A549 (cell line): ENCODE measurements at regions of chr12 and their contacts with region 1.

Region 1: GRCh38 chr12:113048716-113049127 is 7.8 kb upstream of the DTX1 start:
- DNase-seq: peak; percentile 73 to 89
- ATAC-seq: peak; percentile 70 to 90
- H3K4me3 ChIP-seq: no peak overlapping the region
- H3K27ac ChIP-seq: no peak overlapping the region
- H3K4me1 ChIP-seq: no peaks in the 10 kb centered on the region
- CTCF ChIP-seq: peak; percentile 90
- EP300 ChIP-seq: no peak
- POLR2A ChIP-seq: no peak
- RAD21 ChIP-seq: peak; percentile 87 to 96

Region 2: GRCh38 chr12:113030875-113031525 is 17.7 kb before region 1 on chr12:
- CTCF ChIA-PET with region 1: interaction called, 11 read pairs
- POLR2A ChIA-PET with region 1: no interaction called
- DNase-seq: peak; percentile 72 to 88
- ATAC-seq: peak; percentile 87 to 98
- H3K4me3 ChIP-seq: no peak overlapping the region
- H3K27ac ChIP-seq: no peak overlapping the region
- H3K4me1 ChIP-seq: no peaks in the 10 kb centered on the region
- CTCF ChIP-seq: peak; percentile 88
- EP300 ChIP-seq: no peak
- POLR2A ChIP-seq: no peak
- RAD21 ChIP-seq: peak; percentile 81 to 83

Region 3: DNA sequence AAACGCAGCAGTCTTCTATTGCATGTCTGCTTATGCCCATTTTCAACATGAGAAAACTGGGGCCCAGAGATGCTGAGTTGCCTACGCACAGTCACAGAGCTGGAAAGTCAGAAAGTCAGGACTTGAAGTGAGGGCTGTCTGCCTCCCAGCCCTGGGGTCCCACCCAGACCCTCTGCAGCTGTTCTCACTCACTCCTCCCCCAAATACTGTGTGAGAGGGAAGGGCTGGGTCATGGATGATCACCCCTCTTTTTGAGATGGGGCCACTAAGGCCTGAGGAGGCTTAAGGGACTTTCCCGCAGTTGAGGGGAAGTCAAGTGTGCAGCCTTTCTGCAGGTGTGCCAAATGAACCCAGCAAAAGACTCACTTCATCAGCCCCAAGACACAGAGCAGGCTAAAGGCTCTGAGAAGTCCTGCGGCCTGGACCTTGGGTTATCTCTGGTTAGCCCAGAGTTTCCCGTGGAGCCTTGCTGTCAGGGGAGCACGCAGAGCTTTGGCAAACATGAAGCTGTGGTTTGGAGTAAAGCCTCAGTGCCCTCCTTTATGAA is 26.5 kb after region 1 on chr12:
- CTCF ChIA-PET with region 1: interaction called, 22 read pairs
- POLR2A ChIA-PET with region 1: no interaction called
- DNase-seq: no peak
- ATAC-seq: no peak
- H3K4me3 ChIP-seq: no peak overlapping the region
- H3K27ac ChIP-seq: no peak overlapping the region
- H3K4me1 ChIP-seq: peaks cover 8% of the 10 kb centered on the region
- CTCF ChIP-seq: no peak
- EP300 ChIP-seq: no peak
- POLR2A ChIP-seq: no peak
- RAD21 ChIP-seq: no peak

Region 4: GRCh38 chr12:113092607-113093408 is 44.1 kb after region 1 on chr12:
- CTCF ChIA-PET with region 1: interaction called, 61 read pairs
- POLR2A ChIA-PET with region 1: no interaction called
- DNase-seq: peak; percentile 44 to 85
- ATAC-seq: peak; percentile 83 to 92
- H3K4me3 ChIP-seq: peak overlapping the region; percentile 53
- H3K27ac ChIP-seq: peak overlapping the region; percentile 45 to 69; a peak in 3 of 6 replicates
- H3K4me1 ChIP-seq: peaks cover 7% of the 10 kb centered on the region; the same call in 1 of the 3 replicates
- CTCF ChIP-seq: peak; percentile 52
- EP300 ChIP-seq: no peak
- POLR2A ChIP-seq: no peak
- RAD21 ChIP-seq: peak in 1 of 2 experiments; percentile 34; a peak in 1 of 5 replicates

Region 5: GRCh38 chr12:113109872-113110599 is 61.3 kb after region 1 on chr12:
- CTCF ChIA-PET with region 1: interaction called, 16 read pairs
- POLR2A ChIA-PET with region 1: no interaction called
- DNase-seq: no peak
- ATAC-seq: peak in 1 of 2 experiments; percentile 9; a peak in 2 of 6 replicates
- H3K4me3 ChIP-seq: no peak overlapping the region
- H3K27ac ChIP-seq: no peak overlapping the region
- H3K4me1 ChIP-seq: no peaks in the 10 kb centered on the region
- CTCF ChIP-seq: no peak
- EP300 ChIP-seq: no peak
- POLR2A ChIP-seq: no peak
- RAD21 ChIP-seq: no peak

Region 6: DNA sequence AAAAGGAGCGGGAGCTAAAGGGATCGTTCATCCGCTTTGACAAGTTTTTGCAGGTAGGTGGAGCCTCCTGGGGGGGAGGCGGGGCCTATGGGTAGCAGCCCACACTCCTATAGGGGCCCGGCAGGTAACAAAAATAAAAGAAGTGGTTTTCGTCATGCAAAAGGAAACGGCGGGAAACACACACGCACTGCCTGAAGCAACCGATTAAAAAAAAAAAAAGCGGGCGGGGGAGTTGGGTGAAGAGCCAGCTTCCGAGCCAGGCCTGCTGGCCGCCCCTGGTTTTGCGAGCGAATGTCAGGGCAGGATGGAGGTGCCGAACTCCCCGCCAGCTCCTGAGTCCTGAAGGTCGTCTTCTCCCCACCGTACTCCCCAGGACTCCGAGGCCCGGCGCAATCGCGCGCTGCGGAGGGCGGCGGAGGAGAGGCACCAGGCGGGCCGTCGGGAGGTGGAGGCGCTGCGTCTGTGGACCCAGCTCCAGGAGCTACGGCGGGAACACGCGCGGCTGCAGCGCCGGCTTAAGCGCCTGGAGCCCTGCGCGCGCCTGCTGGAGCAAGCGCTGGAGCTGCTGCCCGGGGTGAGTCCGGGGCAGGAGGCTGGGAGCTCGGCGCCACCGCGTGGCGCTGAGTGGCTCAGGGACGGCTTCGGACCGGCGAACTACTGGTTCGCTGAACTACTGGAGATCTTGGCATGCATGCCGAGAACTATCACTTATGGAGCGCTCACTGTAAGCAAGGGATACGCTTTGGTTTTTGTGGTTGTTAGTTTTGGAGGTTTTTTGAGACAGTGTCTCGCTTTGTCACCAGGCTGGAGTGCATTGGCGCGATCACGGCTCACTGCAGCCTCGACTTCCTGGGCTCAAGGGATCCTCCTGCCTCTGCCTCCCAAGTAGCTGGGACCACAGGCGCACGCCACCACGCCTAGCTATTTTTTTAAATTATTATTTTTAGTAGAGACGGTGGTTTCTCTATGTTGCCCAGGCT is 104.4 kb after region 1 on chr12:
- CTCF ChIA-PET with region 1: interaction called, 142 read pairs
- POLR2A ChIA-PET with region 1: no interaction called
- DNase-seq: peak; percentile 90 to 92
- ATAC-seq: peak; percentile 83 to 92
- H3K4me3 ChIP-seq: peak overlapping the region; percentile 43
- H3K27ac ChIP-seq: peak overlapping the region in 1 of 2 experiments; percentile 69; a peak in 2 of 6 replicates
- H3K4me1 ChIP-seq: peaks cover 6% of the 10 kb centered on the region; the same call in 1 of the 3 replicates
- CTCF ChIP-seq: peak; percentile 65
- EP300 ChIP-seq: no peak
- POLR2A ChIP-seq: no peak
- RAD21 ChIP-seq: peak; percentile 67 to 75

Region 7: GRCh38 chr12:113174461-113175384 is 126.0 kb after region 1 on chr12:
- CTCF ChIA-PET with region 1: interaction called, 82 read pairs
- POLR2A ChIA-PET with region 1: no interaction called
- DNase-seq: peak; percentile 68 to 88
- ATAC-seq: peak; percentile 87 to 92
- H3K4me3 ChIP-seq: no peak overlapping the region
- H3K27ac ChIP-seq: no peak overlapping the region
- H3K4me1 ChIP-seq: no peaks in the 10 kb centered on the region
- CTCF ChIP-seq: peak; percentile 91
- EP300 ChIP-seq: no peak
- POLR2A ChIP-seq: no peak
- RAD21 ChIP-seq: peak; percentile 79 to 85

Region 8: GRCh38 chr12:113247123-113248055 is 198.7 kb after region 1 on chr12:
- CTCF ChIA-PET with region 1: no interaction called
- POLR2A ChIA-PET with region 1: no interaction called
- DNase-seq: no peak
- ATAC-seq: no peak; a peak in 1 of 6 replicates
- H3K4me3 ChIP-seq: no peak overlapping the region
- H3K27ac ChIP-seq: no peak overlapping the region; a peak in 1 of 6 replicates
- H3K4me1 ChIP-seq: peaks cover 26% of the 10 kb centered on the region
- CTCF ChIP-seq: no peak
- EP300 ChIP-seq: no peak
- POLR2A ChIP-seq: no peak
- RAD21 ChIP-seq: no peak